MCF 10A (cell line): ENCODE measurements at regions of chr1 and their contacts with region 1.

Region 1: GRCh38 chr1:145885738-145886287 is at the start of gene ANKRD35:
- DNase-seq: peak; percentile 87
- H3K4me3 Mint-ChIP-seq: peak within 1 kb of the TSS; percentile 81
- H3K27ac Mint-ChIP-seq: no peak within 1 kb of the TSS
- H3K4me1 Mint-ChIP-seq: peaks cover 19% of the 10 kb centered on the region
- H3K27me3 Mint-ChIP-seq: peaks cover 12% of the 10 kb centered on the region
- CTCF ChIP-seq: no peak
- total RNA-seq, gene ANKRD35: 0.29 TPM in 1 of 2 replicates, not detected in the other

Region 2: GRCh38 chr1:145906954-145907753 is 21.3 kb after region 1 on chr1:
- CTCF ChIA-PET with region 1: interaction called, 617 read pairs
- POLR2A ChIA-PET with region 1: interaction called, 284 read pairs
- intact Hi-C with region 1: no loop called
- DNase-seq: no peak
- H3K4me3 Mint-ChIP-seq: no peak overlapping the region
- H3K27ac Mint-ChIP-seq: peak overlapping the region; percentile 57
- H3K4me1 Mint-ChIP-seq: peaks cover 24% of the 10 kb centered on the region
- H3K27me3 Mint-ChIP-seq: no peaks in the 10 kb centered on the region
- CTCF ChIP-seq: no peak

Region 3: DNA sequence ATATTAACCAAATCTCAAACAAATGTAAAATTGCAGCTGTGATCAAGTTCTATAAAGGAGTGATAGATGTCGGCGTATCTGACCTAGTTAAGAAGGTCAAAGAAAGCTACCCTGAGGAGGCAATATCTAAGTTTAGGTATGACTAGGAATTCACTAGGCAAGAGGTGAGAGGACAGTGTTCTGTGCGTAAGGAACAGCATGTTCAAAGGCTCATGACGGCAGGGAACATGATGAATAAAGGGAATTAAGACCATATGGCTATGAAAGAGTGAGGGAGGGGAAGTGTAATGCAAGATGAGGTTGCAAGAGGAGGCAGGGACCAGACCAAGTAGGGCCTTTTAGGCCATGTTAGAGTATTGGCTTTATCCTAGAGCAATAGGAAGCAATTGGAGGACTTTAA is 63.4 kb after region 1 on chr1:
- CTCF ChIA-PET with region 1: no interaction called
- POLR2A ChIA-PET with region 1: no interaction called
- intact Hi-C with region 1: no loop called
- DNase-seq: no peak
- H3K4me3 Mint-ChIP-seq: no peak overlapping the region
- H3K27ac Mint-ChIP-seq: no peak overlapping the region
- H3K4me1 Mint-ChIP-seq: peaks cover 7% of the 10 kb centered on the region
- H3K27me3 Mint-ChIP-seq: no peaks in the 10 kb centered on the region
- CTCF ChIP-seq: no peak